ENCODE measurements at regions of chr6 and their contacts with region 1.

Region 1: DNA sequence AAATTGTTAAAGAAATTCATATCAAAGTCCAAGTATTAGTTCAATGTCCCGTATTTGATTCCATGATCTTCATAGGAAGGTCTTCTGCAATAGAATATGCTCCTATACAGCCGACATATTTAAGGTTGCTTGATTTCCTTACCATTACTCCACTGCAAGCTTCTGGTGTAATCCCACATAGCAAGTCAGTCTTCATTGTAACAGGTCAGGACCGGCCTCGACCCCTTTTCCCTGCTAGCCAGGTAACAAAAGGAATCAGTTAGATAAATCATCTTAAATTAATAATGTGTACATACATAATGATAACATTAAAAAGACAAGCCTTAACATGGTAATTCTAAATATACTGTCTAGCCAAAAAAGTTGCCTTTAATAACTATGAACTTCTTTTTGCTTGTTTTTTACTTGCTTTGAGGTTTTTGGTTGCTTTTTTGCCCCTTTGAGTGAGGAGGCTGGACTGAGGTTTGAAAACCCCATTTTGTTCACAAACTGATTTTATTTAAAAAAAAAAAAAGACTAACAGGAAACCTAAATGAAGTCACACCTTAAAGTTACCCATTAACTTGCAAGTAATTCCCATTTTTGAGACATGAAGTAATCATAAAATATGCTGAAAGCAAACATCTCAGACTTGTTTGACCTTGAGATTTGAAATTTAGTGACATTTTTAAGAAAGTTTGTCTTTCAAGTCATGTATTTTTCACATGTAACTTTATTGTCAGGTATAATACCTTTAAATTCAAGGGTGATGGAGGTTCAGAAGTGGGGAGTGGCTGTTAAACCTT is 19.2 kb upstream of the SNX14 start:
- DNase-seq: no peak
- H3K4me3 Mint-ChIP-seq: no peak overlapping the region
- H3K27ac Mint-ChIP-seq: no peak overlapping the region
- H3K4me1 Mint-ChIP-seq: peaks cover 12% of the 10 kb centered on the region
- H3K27me3 Mint-ChIP-seq: no peaks in the 10 kb centered on the region

Region 2: GRCh38 chr6:85628353-85628752 is 15.5 kb after region 1 on chr6:
- intact Hi-C with region 1: loop called (anchors 2 kb)
- DNase-seq: no peak
- H3K4me3 Mint-ChIP-seq: no peak overlapping the region
- H3K27ac Mint-ChIP-seq: peak overlapping the region; percentile 46
- H3K4me1 Mint-ChIP-seq: peaks cover 61% of the 10 kb centered on the region
- H3K27me3 Mint-ChIP-seq: no peaks in the 10 kb centered on the region

Region 3: DNA sequence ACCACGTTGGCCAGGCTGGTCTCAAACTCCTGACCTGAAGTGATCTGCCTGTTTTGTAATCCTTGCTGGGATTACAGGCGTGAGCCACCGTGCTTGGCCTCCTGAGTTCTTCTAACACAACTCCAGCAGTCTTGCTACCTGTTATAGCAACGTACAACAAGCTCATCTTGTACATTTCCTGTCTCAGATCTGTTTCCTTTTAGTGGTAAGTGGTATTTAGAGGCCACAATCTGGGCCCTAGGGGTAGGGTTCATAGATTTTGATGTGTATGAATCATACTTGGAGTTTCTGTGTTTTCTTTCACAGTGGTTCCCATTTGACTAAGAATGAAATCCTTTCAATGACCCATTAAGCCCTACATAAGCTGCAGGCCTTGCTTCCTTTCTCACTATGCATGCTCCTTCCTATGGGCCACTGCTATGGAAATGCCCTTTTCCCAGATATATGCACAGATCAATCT is 56.9 kb after region 1 on chr6:
- intact Hi-C with region 1: loop called (anchors 1 kb)
- DNase-seq: peak; percentile 58
- H3K4me3 Mint-ChIP-seq: peak overlapping the region; percentile 78
- H3K27ac Mint-ChIP-seq: peak overlapping the region; percentile 74
- H3K4me1 Mint-ChIP-seq: peaks cover 56% of the 10 kb centered on the region
- H3K27me3 Mint-ChIP-seq: no peaks in the 10 kb centered on the region

Region 4: DNA sequence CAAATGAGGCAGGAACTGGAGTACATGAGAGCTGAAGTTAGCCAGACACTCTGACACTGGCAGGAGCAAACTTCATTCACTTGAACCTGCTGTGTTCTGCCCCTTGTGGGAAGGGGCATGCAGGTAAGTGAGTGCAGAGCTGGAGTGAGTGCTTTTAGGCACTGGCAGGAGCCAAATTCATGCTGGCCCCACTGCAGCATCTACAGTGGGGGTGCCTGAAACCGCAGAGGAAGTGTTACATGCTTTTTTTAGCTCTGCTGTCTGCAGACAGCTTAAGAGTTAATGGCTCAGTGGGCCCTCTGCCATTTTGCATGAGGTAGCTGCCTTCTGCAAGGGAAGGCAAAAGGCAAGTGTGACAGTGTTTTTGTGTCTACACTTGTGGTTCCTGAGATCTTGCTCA is 197.7 kb after region 1 on chr6:
- intact Hi-C with region 1: no loop called
- DNase-seq: no peak
- H3K4me3 Mint-ChIP-seq: no peak overlapping the region
- H3K27ac Mint-ChIP-seq: no peak overlapping the region
- H3K4me1 Mint-ChIP-seq: no peaks in the 10 kb centered on the region
- H3K27me3 Mint-ChIP-seq: no peaks in the 10 kb centered on the region